Motor neuron (in vitro differentiated cells): ENCODE measurements at regions of chr5 and their contacts with region 1.

Region 1: GRCh38 chr5:168947212-168947868 is 353.6 kb downstream of the SLIT3 start:
- ATAC-seq: peak; percentile 6 to 82 (median 22)
- H3K4me3 ChIP-seq: no peak overlapping the region
- H3K27ac ChIP-seq: no peak overlapping the region
- H3K4me1 ChIP-seq: peaks cover 21% of the 10 kb centered on the region in 2 donors

Region 2: GRCh38 chr5:168268949-168269943 is 678.1 kb before region 1 on chr5:
- in situ Hi-C with region 1: loop called in 1 of 9 experiments (anchors 25 kb)
- ATAC-seq: peak; percentile 82 to 98 (median 96)
- H3K4me3 ChIP-seq: peak overlapping the region; percentile 16 to 28 (median 18)
- H3K27ac ChIP-seq: no peak overlapping the region
- H3K4me1 ChIP-seq: peaks cover 6 to 9% of the 10 kb centered on the region in 2 donors

Region 3: GRCh38 chr5:168291464-168291961 is 655.8 kb before region 1 on chr5 and contains the start of gene WWC1:
- in situ Hi-C with region 1: loop called in 1 of 9 experiments (anchors 25 kb)
- ATAC-seq: peak; percentile 65 to 88 (median 76)
- H3K4me3 ChIP-seq: peak within 1 kb of the TSS; percentile 57 to 96 (median 72)
- H3K27ac ChIP-seq: no peak within 1 kb of the TSS
- H3K4me1 ChIP-seq: peaks cover 20 to 26% of the 10 kb centered on the region in 2 donors
- total RNA-seq, gene WWC1: 5.6 to 74.1 (median 8.9) TPM

Region 4: GRCh38 chr5:168706655-168707069 is 240.7 kb before region 1 on chr5:
- in situ Hi-C with region 1: loop called in 2 of 9 experiments (anchors 25 kb)
- ATAC-seq: peak; percentile 58 to 97 (median 92)
- H3K4me3 ChIP-seq: no peak overlapping the region
- H3K27ac ChIP-seq: no peak overlapping the region
- H3K4me1 ChIP-seq: no peaks in the 10 kb centered on the region